Head of caudate nucleus (tissue), 42 donors: ENCODE measurements at regions of chr1 and their contacts with region 1.

Region 1: GRCh38 chr1:1115786-1116700 is at the start of gene C1orf159:
- DNase-seq: peak; percentile 98 to 100 (median 99)

Region 2: DNA sequence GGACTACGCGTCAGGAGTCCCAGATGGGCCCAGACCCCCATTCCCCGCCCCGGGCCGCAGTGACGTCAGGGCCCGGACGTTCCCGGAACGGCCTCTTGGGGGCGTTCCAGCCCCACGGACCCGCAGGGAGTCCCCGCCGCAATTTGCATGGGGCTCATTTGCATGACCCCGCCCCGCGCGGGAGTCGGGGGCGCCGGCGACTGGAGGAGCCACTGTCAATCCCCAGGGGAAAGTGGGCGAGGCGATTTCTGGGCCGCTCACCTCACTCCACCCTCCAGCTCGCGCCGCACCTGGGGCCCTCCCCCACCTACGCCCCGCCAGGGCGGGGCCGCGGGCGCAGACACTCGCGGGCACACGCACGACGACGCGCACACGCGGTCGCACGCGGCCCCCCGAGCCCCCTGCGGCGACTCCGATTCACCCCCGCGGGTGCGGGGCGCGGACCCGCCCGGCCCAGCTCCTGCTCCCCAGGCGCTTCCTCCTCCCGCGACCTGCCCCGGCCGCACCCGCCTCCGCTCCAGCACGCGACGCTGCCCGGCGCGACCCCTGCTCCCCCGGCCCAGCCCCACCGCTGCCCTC is 82.9 kb before region 1 on chr1:
- intact Hi-C with region 1: loop called (anchors 10 kb)
- DNase-seq: peak; percentile 78 to 97 (median 93)

Region 3: GRCh38 chr1:1231400-1232223 is 115.6 kb after region 1 on chr1 and contains the start of gene SDF4:
- intact Hi-C with region 1: loop called (anchors 5 kb)
- DNase-seq: peak; percentile 88 to 99 (median 97)